ENCODE measurements at regions of chr13 and their contacts with region 1.

Region 1: GRCh38 chr13:113935001-113935844 is 38.7 kb downstream of the C13orf46 start:
- DNase-seq: no peak
- H3K4me3 ChIP-seq: no peak overlapping the region
- H3K27ac ChIP-seq: no peak overlapping the region
- H3K4me1 ChIP-seq: no peaks in the 10 kb centered on the region
- H3K27me3 ChIP-seq: no peaks in the 10 kb centered on the region
- CTCF ChIP-seq: no peak
- POLR2A ChIP-seq: no peak

Region 2: GRCh38 chr13:113816946-113817859 is 118.0 kb before region 1 on chr13:
- intact Hi-C with region 1: loop called (anchors 5 kb)
- DNase-seq: peak; percentile 90
- H3K4me3 ChIP-seq: no peak overlapping the region
- H3K27ac ChIP-seq: peak overlapping the region in 1 of 2 donors; percentile 36
- H3K4me1 ChIP-seq: peaks cover 56% of the 10 kb centered on the region
- H3K27me3 ChIP-seq: no peaks in the 10 kb centered on the region
- CTCF ChIP-seq: peak; percentile 76 to 86 (median 80)
- POLR2A ChIP-seq: no peak

Region 3: DNA sequence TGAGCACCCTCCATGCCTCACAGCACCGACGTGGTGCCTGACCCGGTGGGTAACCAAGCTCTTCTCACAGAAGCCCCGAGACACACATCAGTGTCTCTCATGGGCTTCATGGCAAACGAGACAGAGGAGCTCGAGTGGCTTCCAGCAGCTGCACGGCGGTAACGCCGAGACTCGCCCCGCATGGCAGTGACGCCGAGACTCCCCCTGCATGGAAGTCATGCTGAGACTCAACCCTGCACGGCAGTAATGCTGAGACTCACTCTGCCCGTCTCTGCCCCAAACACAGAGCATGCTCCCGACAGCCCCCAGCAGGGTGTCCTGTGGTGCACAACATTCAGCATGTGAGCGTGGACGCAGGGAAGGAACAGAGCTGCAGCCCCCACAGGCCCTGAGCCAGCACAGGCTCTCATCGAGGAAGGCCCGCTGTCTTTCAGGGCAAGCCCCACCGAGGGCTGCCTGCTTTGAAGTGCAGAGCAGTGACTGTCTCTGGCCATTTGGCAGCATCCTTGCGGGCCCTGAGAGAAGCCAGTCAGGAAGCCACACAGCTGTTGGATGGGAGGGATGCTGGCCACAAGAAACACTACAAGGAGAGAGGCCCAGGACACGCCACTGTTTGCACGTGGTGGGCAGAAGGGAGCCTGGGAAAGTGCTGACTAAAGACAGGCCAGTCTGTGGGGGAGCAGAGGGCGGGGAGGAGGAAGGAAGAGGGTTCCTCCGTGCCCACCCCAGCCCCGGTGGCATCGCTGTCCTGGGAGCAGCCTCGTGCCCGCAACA is 80.8 kb before region 1 on chr13:
- intact Hi-C with region 1: no loop called
- DNase-seq: peak; percentile 55
- H3K4me3 ChIP-seq: no peak overlapping the region
- H3K27ac ChIP-seq: peak overlapping the region in 1 of 2 donors; percentile 41
- H3K4me1 ChIP-seq: peaks cover 68% of the 10 kb centered on the region
- H3K27me3 ChIP-seq: no peaks in the 10 kb centered on the region
- CTCF ChIP-seq: no peak
- POLR2A ChIP-seq: no peak

Measured in testis (tissue), 5 donors.